CD14-positive monocyte (primary cell): ENCODE measurements at regions of chr12 and their contacts with region 1.

Region 1: DNA sequence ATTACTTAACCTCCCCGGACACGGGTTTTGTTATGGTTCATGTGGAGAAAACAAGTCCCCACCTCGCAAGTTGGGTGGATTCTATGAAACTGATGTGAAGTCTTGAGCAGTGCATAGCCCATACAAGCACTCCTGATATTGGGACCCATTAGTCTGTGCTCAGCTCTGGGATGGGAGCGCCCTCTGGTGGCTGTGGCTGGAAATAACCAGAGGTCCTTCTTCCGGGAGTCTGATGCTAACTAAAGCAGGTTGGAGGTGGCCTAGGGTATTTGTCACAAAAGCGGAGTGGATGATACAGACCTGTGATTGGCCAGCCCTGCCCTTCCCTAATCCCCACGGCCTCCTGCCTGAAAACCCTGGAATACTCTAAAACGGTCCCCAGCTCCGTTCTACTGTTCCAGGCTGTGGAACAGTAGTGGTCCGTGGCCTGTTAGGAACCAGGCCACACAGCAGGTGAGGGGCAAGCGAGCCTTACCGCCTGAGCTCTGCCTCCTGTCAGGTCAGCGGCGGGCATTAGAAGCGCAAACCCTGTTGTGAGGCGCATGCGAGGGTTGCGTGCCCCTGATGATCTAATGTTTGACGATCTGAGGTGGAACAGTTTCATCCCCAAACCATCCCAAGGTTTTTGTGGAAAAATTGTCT is 6.4 kb downstream of the SLC48A1 start:
- DNase-seq: peak; percentile 75 to 82 (median 78)
- H3K4me3 ChIP-seq: no peak overlapping the region
- H3K4me3 Mint-ChIP-seq: no peak overlapping the region
- H3K27ac ChIP-seq: no peak overlapping the region
- H3K27ac Mint-ChIP-seq: peak overlapping the region in 1 of 7 donors; percentile 68
- H3K4me1 ChIP-seq: peaks cover 40% of the 10 kb centered on the region in 2 donors
- H3K4me1 Mint-ChIP-seq: peaks cover 40% of the 10 kb centered on the region
- H3K27me3 ChIP-seq: no peaks in the 10 kb centered on the region
- H3K27me3 Mint-ChIP-seq: peaks cover 0 to 2% (median 2%) of the 10 kb centered on the region in 3 donors
- CTCF ChIP-seq: peak; percentile 95

Region 2: GRCh38 chr12:47651368-47652254 is 127.8 kb before region 1 on chr12:
- intact Hi-C with region 1: loop called (anchors 5 to 10 kb)
- DNase-seq: peak; percentile 37 to 75 (median 46)
- H3K4me3 ChIP-seq: peak overlapping the region in 1 of 3 experiments; percentile 50
- H3K4me3 Mint-ChIP-seq: peak overlapping the region; percentile 24 to 39
- H3K27ac ChIP-seq: peak overlapping the region in 1 of 2 donors; percentile 44
- H3K27ac Mint-ChIP-seq: peak overlapping the region in 5 of 7 donors; percentile 1 to 63 (median 24)
- H3K4me1 ChIP-seq: peaks cover 4 to 19% of the 10 kb centered on the region in 2 donors
- H3K4me1 Mint-ChIP-seq: peaks cover 19% of the 10 kb centered on the region
- H3K27me3 ChIP-seq: no peaks in the 10 kb centered on the region
- H3K27me3 Mint-ChIP-seq: no peaks in the 10 kb centered on the region
- CTCF ChIP-seq: peak; percentile 69

Region 3: GRCh38 chr12:47715393-47715876 is 64.0 kb before region 1 on chr12:
- intact Hi-C with region 1: loop called (anchors 2 kb)
- DNase-seq: peak; percentile 75 to 91 (median 84)
- H3K4me3 ChIP-seq: peak overlapping the region in 1 of 3 experiments; percentile 12
- H3K4me3 Mint-ChIP-seq: peak overlapping the region in 1 of 2 donors; percentile 39
- H3K27ac ChIP-seq: no peak overlapping the region
- H3K27ac Mint-ChIP-seq: peak overlapping the region; percentile 21 to 88 (median 81)
- H3K4me1 ChIP-seq: peaks cover 38 to 41% of the 10 kb centered on the region in 2 donors
- H3K4me1 Mint-ChIP-seq: peaks cover 50% of the 10 kb centered on the region
- H3K27me3 ChIP-seq: no peaks in the 10 kb centered on the region
- H3K27me3 Mint-ChIP-seq: peaks cover 2 to 7% (median 4%) of the 10 kb centered on the region in 3 donors
- CTCF ChIP-seq: peak; percentile 80

Region 4: GRCh38 chr12:47742253-47742825 is 37.1 kb before region 1 on chr12:
- intact Hi-C with region 1: loop called (anchors 2 to 5 kb)
- DNase-seq: peak; percentile 43 to 65 (median 64)
- H3K4me3 ChIP-seq: no peak overlapping the region
- H3K4me3 Mint-ChIP-seq: no peak overlapping the region
- H3K27ac ChIP-seq: no peak overlapping the region
- H3K27ac Mint-ChIP-seq: no peak overlapping the region
- H3K4me1 ChIP-seq: peaks cover 21 to 26% of the 10 kb centered on the region in 2 donors
- H3K4me1 Mint-ChIP-seq: peaks cover 40% of the 10 kb centered on the region
- H3K27me3 ChIP-seq: no peaks in the 10 kb centered on the region
- H3K27me3 Mint-ChIP-seq: peaks cover 16 to 26% (median 18%) of the 10 kb centered on the region in 3 donors
- CTCF ChIP-seq: peak; percentile 100

Region 5: GRCh38 chr12:47758834-47759690 is 20.4 kb before region 1 on chr12 and contains the start of gene RAPGEF3:
- intact Hi-C with region 1: loop called in 1 of 2 experiments (anchors 2 kb)
- DNase-seq: peak; percentile 85 to 90 (median 86)
- H3K4me3 ChIP-seq: peak within 1 kb of the TSS; percentile 60 to 82 (median 61)
- H3K4me3 Mint-ChIP-seq: peak within 1 kb of the TSS; percentile 80 to 85
- H3K27ac ChIP-seq: peak within 1 kb of the TSS in 1 of 2 donors; percentile 91
- H3K27ac Mint-ChIP-seq: peak within 1 kb of the TSS; percentile 46 to 92 (median 73)
- H3K4me1 ChIP-seq: peaks cover 26 to 42% of the 10 kb centered on the region in 2 donors
- H3K4me1 Mint-ChIP-seq: peaks cover 32% of the 10 kb centered on the region
- H3K27me3 ChIP-seq: no peaks in the 10 kb centered on the region
- H3K27me3 Mint-ChIP-seq: peaks cover 9 to 21% (median 17%) of the 10 kb centered on the region in 3 donors
- CTCF ChIP-seq: peak; percentile 73
- polyA plus RNA-seq, gene RAPGEF3: 0.08 to 2.5 (median 0.60) TPM

Region 6: DNA sequence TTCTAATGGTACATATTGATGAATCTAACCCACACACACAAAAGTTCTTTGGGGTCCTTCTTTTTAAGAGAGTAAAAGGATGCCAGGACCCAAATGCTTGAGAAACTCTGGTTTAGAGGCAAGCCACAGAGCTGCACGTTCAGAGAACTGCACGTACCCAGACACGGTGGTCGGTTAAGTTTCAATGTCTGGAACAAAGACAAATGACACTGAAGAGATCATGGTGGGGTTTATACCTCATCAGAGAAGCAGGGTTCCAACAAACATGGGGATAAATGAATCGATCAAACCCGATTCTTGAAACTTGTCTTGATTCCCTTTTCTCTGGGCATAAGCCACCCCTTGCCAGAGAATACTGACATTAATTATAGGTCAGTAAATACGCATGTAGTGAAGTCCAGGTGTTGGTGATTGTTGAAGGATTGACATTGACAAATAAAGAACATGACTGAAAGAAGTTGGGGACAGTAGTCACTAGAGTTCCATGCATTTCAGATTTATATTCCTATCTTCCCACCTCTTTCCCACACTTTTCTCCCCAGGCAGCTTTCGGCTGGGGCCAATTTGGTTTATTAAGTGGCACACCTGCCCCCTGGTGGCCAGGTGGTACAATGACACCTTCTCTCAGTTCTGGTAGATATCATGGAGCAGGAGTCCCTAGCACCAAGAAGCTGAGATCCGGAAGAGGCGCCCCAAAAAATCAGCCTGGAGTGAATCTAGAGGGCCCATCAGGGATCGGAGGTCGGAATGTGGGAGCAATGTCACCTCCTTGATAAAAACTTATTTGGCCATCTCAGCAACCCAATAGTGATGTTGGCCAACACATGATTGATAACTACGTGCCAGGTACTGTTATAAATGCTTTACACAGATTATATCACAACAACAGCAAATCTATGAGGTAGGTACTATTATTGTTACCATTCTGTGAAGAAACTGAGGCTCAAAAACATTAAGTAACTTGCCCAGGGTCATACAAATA is 58.1 kb after region 1 on chr12:
- intact Hi-C with region 1: loop called (anchors 10 kb)
- DNase-seq: peak; percentile 47 to 78 (median 66)
- H3K4me3 ChIP-seq: no peak overlapping the region
- H3K4me3 Mint-ChIP-seq: peak overlapping the region in 1 of 2 donors; percentile 22
- H3K27ac ChIP-seq: no peak overlapping the region
- H3K27ac Mint-ChIP-seq: no peak overlapping the region
- H3K4me1 ChIP-seq: peaks cover 17 to 26% of the 10 kb centered on the region in 2 donors
- H3K4me1 Mint-ChIP-seq: peaks cover 33% of the 10 kb centered on the region
- H3K27me3 ChIP-seq: no peaks in the 10 kb centered on the region
- H3K27me3 Mint-ChIP-seq: peaks cover 4 to 7% (median 5%) of the 10 kb centered on the region in 3 donors
- CTCF ChIP-seq: peak; percentile 97